ENCODE measurements at regions of chr1 and their contacts with region 1.

Region 1: GRCh38 chr1:47432071-47433036 is 5.5 kb upstream of the FOXD2 start:
- DNase-seq: peak; percentile 77
- H3K4me3 Mint-ChIP-seq: peak overlapping the region; percentile 37
- H3K27ac Mint-ChIP-seq: peak overlapping the region; percentile 76
- H3K4me1 Mint-ChIP-seq: peaks cover 43% of the 10 kb centered on the region
- H3K27me3 Mint-ChIP-seq: peaks cover 68% of the 10 kb centered on the region

Region 2: DNA sequence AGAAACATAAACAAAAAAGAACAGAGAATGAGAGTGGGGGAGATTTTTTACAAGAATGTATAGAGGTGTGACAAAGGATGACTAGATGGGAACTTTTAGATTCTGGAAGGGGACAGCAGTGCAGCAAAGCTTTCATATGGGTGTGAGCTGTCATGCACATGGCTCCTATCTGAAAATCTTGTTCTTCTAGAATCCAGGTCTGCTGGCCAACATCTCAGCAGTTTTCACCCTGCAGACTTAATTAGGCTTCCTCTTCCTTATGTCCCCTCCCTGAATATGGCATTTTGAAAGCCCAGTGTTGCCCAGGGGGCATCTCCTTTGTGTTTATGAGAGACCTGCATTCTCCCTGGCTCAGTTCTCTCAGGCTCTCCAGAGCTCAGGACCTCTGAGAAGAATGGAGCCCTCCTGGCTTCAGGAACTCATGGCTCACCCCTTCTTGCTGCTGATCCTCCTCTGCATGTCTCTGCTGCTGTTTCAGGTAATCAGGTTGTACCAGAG is 365.2 kb before region 1 on chr1 and contains the start of gene CYP4Z1:
- CTCF ChIA-PET with region 1: no interaction called
- DNase-seq: no peak
- H3K4me3 Mint-ChIP-seq: no peak within 1 kb of the TSS
- H3K27ac Mint-ChIP-seq: no peak within 1 kb of the TSS
- H3K4me1 Mint-ChIP-seq: no peaks in the 10 kb centered on the region
- H3K27me3 Mint-ChIP-seq: peaks cover 31% of the 10 kb centered on the region

Region 3: DNA sequence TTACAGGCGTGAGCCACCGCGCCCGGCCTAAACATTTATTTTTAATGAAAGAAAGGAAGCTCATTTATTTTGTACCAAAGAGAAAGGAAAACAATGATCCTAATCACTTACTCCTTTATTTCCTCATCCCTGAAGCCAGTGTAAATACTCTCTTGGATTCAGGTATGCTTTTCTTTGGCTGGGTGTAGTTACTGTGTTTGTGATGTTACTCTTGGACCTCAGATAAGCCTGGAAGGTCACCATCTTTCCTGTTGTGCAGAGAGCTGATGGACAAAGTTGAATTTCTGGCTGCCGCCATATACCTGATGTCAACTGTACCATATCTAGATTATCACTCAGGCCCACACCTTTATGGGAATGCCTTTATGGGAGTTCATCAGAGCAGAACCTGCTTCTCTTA is 51.7 kb before region 1 on chr1:
- CTCF ChIA-PET with region 1: no interaction called
- DNase-seq: no peak
- H3K4me3 Mint-ChIP-seq: no peak overlapping the region
- H3K27ac Mint-ChIP-seq: no peak overlapping the region
- H3K4me1 Mint-ChIP-seq: no peaks in the 10 kb centered on the region
- H3K27me3 Mint-ChIP-seq: no peaks in the 10 kb centered on the region

Region 4: GRCh38 chr1:47418681-47419325 is 13.6 kb before region 1 on chr1:
- CTCF ChIA-PET with region 1: interaction called, 11 read pairs
- DNase-seq: no peak
- H3K4me3 Mint-ChIP-seq: no peak overlapping the region
- H3K27ac Mint-ChIP-seq: no peak overlapping the region
- H3K4me1 Mint-ChIP-seq: peaks cover 8% of the 10 kb centered on the region
- H3K27me3 Mint-ChIP-seq: peaks cover 66% of the 10 kb centered on the region

Region 5: DNA sequence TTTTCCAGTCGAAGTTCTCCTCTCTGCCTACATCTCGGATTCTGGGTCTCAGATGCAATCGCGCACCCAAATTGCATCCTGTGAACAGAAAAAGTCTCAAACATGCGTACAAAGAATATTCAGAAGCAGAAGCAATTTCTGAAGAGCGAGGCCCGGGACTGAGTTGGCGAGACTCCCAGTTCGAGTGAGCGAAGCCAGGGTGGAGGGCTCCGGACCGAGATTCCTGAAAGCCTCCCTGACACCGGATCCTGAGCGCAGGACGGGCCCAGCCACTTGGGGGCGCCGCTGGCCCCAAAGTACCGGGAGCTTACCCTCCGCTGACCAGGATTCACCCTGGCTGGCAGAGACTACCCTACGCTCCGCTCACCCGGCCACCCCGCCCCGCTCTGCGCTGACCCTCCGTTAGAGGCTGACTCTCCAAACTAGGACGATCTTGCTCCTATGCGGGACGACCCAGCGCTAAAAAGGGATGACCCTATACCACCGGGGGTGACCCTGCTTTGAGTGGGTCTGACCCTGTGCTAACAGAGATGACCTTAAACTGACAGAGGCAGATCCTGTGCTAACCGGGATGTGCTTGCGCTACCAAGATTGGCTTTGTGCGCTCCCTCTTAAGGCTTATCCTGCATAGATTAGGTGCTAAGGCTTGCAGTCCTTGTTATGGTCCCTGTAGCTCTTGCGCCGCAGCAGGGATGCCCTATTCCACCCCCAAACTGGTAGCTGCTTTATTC is 17.6 kb after region 1 on chr1:
- CTCF ChIA-PET with region 1: interaction called, 23 read pairs
- DNase-seq: no peak
- H3K4me3 Mint-ChIP-seq: no peak overlapping the region
- H3K27ac Mint-ChIP-seq: no peak overlapping the region
- H3K4me1 Mint-ChIP-seq: peaks cover 4% of the 10 kb centered on the region
- H3K27me3 Mint-ChIP-seq: peaks cover 56% of the 10 kb centered on the region

Region 6: GRCh38 chr1:47710329-47711071 is 278.1 kb after region 1 on chr1:
- CTCF ChIA-PET with region 1: interaction called, 22 read pairs
- DNase-seq: peak; percentile 77
- H3K4me3 Mint-ChIP-seq: no peak overlapping the region
- H3K27ac Mint-ChIP-seq: no peak overlapping the region
- H3K4me1 Mint-ChIP-seq: peaks cover 8% of the 10 kb centered on the region
- H3K27me3 Mint-ChIP-seq: peaks cover 93% of the 10 kb centered on the region

Measured in activated naive CD4-positive, alpha-beta T cell treated with anti-CD3 and anti-CD28 coated beads, Interleukin-2, amount 10 ng/mL, durations not matched to agents 7 days and 5 days (primary cell).